AG04449 (cell line): ENCODE measurements at regions of chr7 and their contacts with region 1.

Region 1: DNA sequence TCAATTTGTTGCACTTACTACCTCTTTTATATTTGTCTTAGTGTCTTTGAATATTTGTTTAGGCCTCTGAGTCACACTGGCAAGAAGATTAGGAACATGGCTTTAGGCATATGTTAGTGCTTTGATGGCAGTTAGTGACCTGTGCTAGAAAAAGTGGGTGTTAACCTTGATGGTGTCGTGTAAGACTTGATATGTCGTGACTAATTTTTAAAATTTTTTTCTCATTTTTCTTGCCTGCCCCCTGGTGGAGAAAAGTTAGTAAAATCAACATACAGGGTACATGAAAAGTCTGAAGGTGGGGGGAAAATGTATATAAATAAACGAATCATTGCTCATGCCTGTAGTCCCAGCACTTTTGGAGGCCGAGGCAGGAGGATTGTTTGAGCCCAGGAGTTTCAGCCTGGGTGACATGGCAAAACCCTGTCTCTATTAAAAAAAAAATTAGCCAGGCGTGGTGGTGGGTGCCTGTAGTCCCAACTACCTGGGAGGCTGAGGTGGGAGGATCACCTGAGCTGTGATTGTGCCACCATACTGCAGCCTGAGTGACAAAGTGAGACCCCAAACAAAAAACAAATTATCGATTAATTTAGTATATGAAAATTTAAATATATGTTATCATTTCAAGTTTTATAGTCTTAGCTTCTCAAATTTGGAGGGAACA is 44.6 kb downstream of the TAX1BP1 start:
- DNase-seq: no peak
- H3K4me3 ChIP-seq: no peak overlapping the region
- CTCF ChIP-seq: peak; percentile 10

Region 2: DNA sequence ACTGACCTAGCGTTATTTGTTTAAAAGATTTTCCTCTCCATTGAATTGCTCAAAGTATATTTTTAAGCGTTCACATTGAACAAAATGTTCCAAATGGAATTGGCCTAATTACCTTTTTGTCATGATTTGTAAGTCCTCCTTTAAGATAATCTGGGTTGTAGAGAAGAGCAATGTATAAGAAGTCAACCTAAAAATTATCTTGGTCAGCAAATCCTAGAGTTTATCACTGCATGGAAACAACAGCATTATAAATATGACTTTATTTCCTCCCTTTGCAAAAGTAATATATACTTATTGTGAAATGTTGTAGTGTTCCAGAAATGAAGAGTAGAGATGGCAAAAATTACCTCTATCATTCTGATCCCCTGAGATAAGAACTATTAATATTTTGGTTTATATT is 14.7 kb after region 1 on chr7:
- CTCF ChIA-PET with region 1: interaction called, 12 read pairs
- POLR2A ChIA-PET with region 1: no interaction called
- DNase-seq: no peak
- H3K4me3 ChIP-seq: no peak overlapping the region
- CTCF ChIP-seq: no peak

Region 3: GRCh38 chr7:27812703-27813102 is 28.2 kb after region 1 on chr7:
- CTCF ChIA-PET with region 1: no interaction called
- POLR2A ChIA-PET with region 1: no interaction called
- DNase-seq: no peak
- H3K4me3 ChIP-seq: no peak overlapping the region
- CTCF ChIP-seq: no peak

Region 4: GRCh38 chr7:27890205-27890849 is 105.8 kb after region 1 on chr7:
- CTCF ChIA-PET with region 1: no interaction called
- POLR2A ChIA-PET with region 1: no interaction called
- DNase-seq: no peak
- H3K4me3 ChIP-seq: no peak overlapping the region
- CTCF ChIP-seq: no peak

Region 5: DNA sequence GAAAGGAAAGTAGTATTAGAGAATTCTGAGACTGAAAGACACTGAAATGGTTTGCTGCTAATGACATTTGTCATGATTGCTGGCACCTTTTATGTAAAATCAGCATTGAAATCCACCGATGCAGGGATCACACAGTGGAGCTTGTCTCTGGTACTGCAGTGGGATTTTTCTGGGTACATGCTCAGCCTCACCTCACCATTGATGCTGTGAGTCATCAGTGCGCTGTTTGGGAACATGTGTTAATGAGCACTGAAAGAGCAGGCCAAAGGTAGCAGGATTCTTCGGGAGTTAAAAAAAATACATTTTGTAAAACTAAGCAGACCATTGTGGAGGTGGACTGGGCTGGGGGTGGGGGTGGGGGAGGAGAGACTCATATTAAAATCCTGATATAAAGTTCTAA is 802.7 kb after region 1 on chr7:
- CTCF ChIA-PET with region 1: no interaction called
- POLR2A ChIA-PET with region 1: no interaction called
- DNase-seq: no peak
- H3K4me3 ChIP-seq: no peak overlapping the region
- CTCF ChIP-seq: no peak